BJ (cell line): ENCODE measurements at regions of chr5 and their contacts with region 1.

Region 1: DNA sequence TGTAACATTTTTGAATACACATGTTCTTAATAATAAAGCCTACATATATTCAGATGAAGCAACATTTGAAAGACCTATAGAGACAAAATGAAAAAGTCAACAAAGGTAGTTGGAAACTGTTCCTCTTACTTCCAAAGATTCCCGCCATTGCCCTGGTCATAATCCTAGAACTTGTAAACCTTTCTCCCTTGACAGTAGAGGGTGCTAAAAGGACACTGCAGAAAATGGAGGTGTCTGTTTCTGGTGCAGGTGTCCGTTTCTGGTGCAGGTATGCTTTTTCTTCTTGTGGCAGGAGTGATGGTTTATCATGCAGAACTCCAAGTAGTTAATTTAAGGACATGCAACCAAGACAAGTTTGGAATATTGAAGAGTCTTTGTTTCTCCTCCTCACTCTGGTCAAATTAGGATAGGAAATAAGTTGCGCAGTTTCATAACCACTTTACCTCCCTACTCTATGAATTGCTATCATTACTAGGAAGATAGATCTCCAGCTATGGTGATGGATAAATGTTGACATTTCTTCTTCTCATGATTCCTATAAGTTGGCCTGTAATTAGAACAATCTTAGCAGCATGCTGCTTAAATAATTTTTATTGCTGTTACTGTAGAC is 56.0 kb upstream of the FAM174A start:
- DNase-seq: no peak
- H3K4me3 ChIP-seq: no peak overlapping the region
- H3K27me3 ChIP-seq: no peaks in the 10 kb centered on the region
- CTCF ChIP-seq: peak; percentile 24; the same call in 1 of the 2 replicates

Region 2: GRCh38 chr5:100464418-100464817 is 14.8 kb before region 1 on chr5:
- CTCF ChIA-PET with region 1: interaction called, 10 read pairs
- POLR2A ChIA-PET with region 1: no interaction called
- DNase-seq: no peak
- H3K4me3 ChIP-seq: no peak overlapping the region
- H3K27me3 ChIP-seq: no peaks in the 10 kb centered on the region
- CTCF ChIP-seq: no peak